Mammary epithelial cell (primary cell): ENCODE measurements at regions of chr3 and their contacts with region 1.

Region 1: GRCh38 chr3:148943506-148944205 is 47.7 kb upstream of the GYG1 start:
- DNase-seq: peak; percentile 73
- H3K4me3 ChIP-seq: no peak overlapping the region
- H3K27ac ChIP-seq: no peak overlapping the region
- H3K4me1 ChIP-seq: no peaks in the 10 kb centered on the region
- H3K27me3 ChIP-seq: no peaks in the 10 kb centered on the region
- CTCF ChIP-seq: peak; percentile 67 to 73

Region 2: GRCh38 chr3:148379763-148380382 is 563.8 kb before region 1 on chr3:
- CTCF ChIA-PET with region 1: no interaction called
- dilution Hi-C with region 1: no loop called
- in situ Hi-C with region 1: loop called (anchors 10 to 25 kb)
- intact Hi-C with region 1: loop called (anchors 1 kb)
- DNase-seq: peak; percentile 35
- H3K4me3 ChIP-seq: no peak overlapping the region
- H3K27ac ChIP-seq: no peak overlapping the region
- H3K4me1 ChIP-seq: no peaks in the 10 kb centered on the region
- H3K27me3 ChIP-seq: no peaks in the 10 kb centered on the region
- CTCF ChIP-seq: peak; percentile 35 to 56

Region 3: DNA sequence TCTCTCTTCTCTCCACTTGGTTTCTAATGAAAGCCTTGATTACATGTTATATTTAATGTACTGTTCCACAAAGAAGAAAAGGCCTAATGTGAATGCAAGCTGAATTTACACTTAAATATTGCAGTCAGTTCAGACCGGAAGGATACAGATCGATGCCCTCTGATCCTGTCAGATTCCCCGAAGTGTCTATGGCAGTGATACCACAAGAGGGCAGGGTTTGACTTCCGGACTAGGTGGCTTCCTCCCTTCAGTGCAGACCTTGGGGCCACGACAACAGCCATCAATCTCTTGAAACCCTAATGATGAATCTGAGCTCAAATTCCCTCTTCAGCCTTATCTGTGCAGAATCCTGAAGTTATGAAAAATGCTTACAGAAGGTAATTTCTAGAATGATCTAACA is 216.4 kb before region 1 on chr3:
- CTCF ChIA-PET with region 1: no interaction called
- dilution Hi-C with region 1: no loop called
- in situ Hi-C with region 1: no loop called
- intact Hi-C with region 1: loop called (anchors 1 kb)
- DNase-seq: no peak
- H3K4me3 ChIP-seq: no peak overlapping the region
- H3K27ac ChIP-seq: no peak overlapping the region
- H3K4me1 ChIP-seq: no peaks in the 10 kb centered on the region
- H3K27me3 ChIP-seq: no peaks in the 10 kb centered on the region
- CTCF ChIP-seq: peak; percentile 28 to 49

Region 4: GRCh38 chr3:148861277-148861869 is 82.3 kb before region 1 on chr3:
- CTCF ChIA-PET with region 1: no interaction called
- dilution Hi-C with region 1: no loop called
- in situ Hi-C with region 1: loop called (anchors 5 to 10 kb)
- intact Hi-C with region 1: loop called (anchors 1 kb)
- DNase-seq: peak; percentile 26
- H3K4me3 ChIP-seq: no peak overlapping the region
- H3K27ac ChIP-seq: no peak overlapping the region
- H3K4me1 ChIP-seq: no peaks in the 10 kb centered on the region
- H3K27me3 ChIP-seq: no peaks in the 10 kb centered on the region
- CTCF ChIP-seq: peak; percentile 50 to 64

Region 5: DNA sequence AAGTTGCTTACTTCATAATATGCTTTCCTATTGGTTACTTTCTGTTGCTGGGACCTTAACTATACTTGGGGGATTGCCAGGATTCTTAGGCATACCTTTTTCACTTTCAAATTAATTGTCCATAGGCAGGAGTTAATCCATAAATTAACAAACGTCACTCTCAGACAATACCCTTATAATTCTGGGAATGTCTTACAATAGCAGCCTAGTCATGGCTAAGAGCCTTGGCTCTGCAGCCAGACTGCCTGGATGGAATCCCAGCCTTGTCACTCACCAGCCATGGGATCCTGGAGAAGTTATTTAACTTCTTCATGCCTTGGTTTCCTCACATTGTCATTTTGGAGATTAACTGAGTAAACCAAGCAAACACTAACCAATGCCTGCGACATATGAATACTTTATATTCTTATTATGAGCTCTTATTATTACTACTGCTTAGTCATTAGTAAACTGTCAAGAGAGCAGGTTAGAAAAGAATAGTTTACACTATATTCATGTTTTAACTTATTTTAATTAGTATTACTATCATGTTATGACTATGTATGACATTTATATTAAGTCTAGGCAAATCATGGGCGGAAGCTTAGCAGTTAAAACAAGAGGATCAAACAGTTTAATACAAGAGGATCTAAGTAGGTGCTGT is 76.7 kb after region 1 on chr3:
- CTCF ChIA-PET with region 1: no interaction called
- dilution Hi-C with region 1: no loop called
- in situ Hi-C with region 1: no loop called
- intact Hi-C with region 1: no loop called
- DNase-seq: no peak
- H3K4me3 ChIP-seq: no peak overlapping the region
- H3K27ac ChIP-seq: no peak overlapping the region
- H3K4me1 ChIP-seq: peaks cover 30% of the 10 kb centered on the region
- H3K27me3 ChIP-seq: no peaks in the 10 kb centered on the region
- CTCF ChIP-seq: no peak

Region 6: DNA sequence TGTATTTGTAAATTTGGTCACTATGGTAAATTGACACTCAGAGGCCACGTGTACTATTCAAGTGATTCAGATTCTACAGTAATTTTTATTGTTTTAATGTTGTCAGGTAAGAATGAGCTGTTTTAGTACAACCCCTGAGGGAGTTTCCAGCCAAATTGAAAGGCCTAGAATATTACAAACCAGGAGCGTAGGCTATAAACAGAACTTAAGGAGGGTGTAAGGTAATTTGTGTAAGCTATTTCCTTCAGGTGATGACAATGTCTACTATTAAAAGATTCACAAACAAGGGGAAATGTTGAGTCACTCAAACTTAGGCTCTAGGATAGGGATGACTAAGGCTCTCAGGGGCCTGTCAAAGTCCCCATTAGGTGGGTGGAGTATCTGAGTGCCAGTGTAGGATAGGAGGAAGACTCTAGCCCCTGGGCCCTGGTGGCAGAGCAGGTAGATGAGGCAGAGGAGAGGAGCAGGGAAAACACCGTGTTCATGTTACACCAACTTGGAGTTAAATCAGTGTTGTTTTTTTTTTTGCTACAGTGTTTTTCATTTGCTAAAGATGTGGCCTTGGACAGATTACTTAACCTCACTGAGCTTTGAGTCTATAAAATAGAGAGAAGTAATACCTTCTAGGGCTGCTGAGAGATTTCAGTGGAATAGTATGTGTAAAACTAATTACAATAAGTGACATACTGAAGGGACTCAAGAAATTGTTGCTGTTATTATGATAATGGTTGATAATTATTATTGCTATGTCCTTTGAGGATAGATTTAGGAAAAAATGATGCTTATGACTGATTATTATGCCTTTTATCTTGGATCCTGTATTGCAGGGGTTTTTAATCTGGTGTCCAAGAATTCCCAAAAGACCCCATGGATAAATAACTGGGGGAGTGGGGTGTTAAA is 423.5 kb after region 1 on chr3:
- CTCF ChIA-PET with region 1: no interaction called
- dilution Hi-C with region 1: no loop called
- in situ Hi-C with region 1: no loop called
- intact Hi-C with region 1: no loop called
- DNase-seq: peak; percentile 99
- H3K4me3 ChIP-seq: no peak overlapping the region
- H3K27ac ChIP-seq: peak overlapping the region; percentile 99
- H3K4me1 ChIP-seq: peaks cover 54% of the 10 kb centered on the region
- H3K27me3 ChIP-seq: no peaks in the 10 kb centered on the region
- CTCF ChIP-seq: no peak